ENCODE measurements at regions of chr17 and their contacts with region 1.

Region 1: GRCh38 chr17:17919169-17920107 is 52.8 kb downstream of the TOM1L2 start:
- DNase-seq: peak; percentile 70
- H3K4me3 Mint-ChIP-seq: no peak overlapping the region
- H3K27ac Mint-ChIP-seq: no peak overlapping the region
- H3K4me1 Mint-ChIP-seq: peaks cover 11% of the 10 kb centered on the region
- H3K27me3 Mint-ChIP-seq: no peaks in the 10 kb centered on the region

Region 2: DNA sequence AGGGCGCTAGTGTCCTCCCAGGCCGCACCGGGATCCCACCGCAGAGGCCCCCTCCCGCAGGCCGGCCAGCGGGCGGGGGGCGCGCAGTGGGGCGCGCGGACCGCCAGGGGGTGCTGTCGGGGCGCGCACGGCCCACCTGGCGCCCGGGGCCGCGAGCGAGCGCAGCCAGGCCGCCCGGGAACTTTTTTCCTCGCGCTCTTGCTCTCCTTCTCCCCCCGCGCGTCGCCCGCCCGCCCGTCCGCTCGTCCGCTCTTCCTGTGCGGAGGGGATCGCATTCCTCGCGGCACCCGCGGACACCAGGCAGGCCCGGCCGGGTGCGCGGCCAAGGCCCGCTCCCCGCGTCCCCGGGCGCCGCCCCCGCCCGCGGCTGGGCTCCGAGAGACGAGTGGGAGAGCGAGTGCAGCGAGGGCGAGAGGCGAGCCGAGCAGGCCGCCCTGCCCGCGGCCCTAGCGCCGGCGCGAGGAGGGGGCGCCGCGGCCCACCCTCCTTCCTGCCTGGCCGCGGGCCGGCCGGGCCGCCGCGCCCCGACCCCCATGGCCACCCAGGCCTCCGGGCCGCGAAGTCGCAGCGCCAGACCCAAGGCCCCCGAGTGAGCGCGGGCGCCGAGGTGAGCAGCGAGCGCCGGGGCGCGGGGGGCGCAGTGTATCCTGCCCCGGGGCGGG is 238.1 kb before region 1 on chr17 and contains the start of gene RAI1:
- CTCF ChIA-PET with region 1: interaction called, 18 read pairs
- POLR2A ChIA-PET with region 1: no interaction called
- DNase-seq: peak; percentile 72
- H3K4me3 Mint-ChIP-seq: peak within 1 kb of the TSS; percentile 71
- H3K27ac Mint-ChIP-seq: peak within 1 kb of the TSS; percentile 75
- H3K4me1 Mint-ChIP-seq: peaks cover 36% of the 10 kb centered on the region
- H3K27me3 Mint-ChIP-seq: peaks cover 7% of the 10 kb centered on the region
- total RNA-seq, gene RAI1: 16.7 TPM

Region 3: GRCh38 chr17:17868641-17869522 is 50.6 kb before region 1 on chr17:
- CTCF ChIA-PET with region 1: no interaction called
- POLR2A ChIA-PET with region 1: no interaction called
- DNase-seq: no peak
- H3K4me3 Mint-ChIP-seq: no peak overlapping the region
- H3K27ac Mint-ChIP-seq: no peak overlapping the region
- H3K4me1 Mint-ChIP-seq: no peaks in the 10 kb centered on the region
- H3K27me3 Mint-ChIP-seq: no peaks in the 10 kb centered on the region

Region 4: GRCh38 chr17:17890773-17891759 is 28.4 kb before region 1 on chr17:
- CTCF ChIA-PET with region 1: interaction called, 15 read pairs
- POLR2A ChIA-PET with region 1: interaction called, 3 read pairs
- DNase-seq: peak; percentile 57
- H3K4me3 Mint-ChIP-seq: no peak overlapping the region
- H3K27ac Mint-ChIP-seq: no peak overlapping the region
- H3K4me1 Mint-ChIP-seq: no peaks in the 10 kb centered on the region
- H3K27me3 Mint-ChIP-seq: no peaks in the 10 kb centered on the region

Region 5: DNA sequence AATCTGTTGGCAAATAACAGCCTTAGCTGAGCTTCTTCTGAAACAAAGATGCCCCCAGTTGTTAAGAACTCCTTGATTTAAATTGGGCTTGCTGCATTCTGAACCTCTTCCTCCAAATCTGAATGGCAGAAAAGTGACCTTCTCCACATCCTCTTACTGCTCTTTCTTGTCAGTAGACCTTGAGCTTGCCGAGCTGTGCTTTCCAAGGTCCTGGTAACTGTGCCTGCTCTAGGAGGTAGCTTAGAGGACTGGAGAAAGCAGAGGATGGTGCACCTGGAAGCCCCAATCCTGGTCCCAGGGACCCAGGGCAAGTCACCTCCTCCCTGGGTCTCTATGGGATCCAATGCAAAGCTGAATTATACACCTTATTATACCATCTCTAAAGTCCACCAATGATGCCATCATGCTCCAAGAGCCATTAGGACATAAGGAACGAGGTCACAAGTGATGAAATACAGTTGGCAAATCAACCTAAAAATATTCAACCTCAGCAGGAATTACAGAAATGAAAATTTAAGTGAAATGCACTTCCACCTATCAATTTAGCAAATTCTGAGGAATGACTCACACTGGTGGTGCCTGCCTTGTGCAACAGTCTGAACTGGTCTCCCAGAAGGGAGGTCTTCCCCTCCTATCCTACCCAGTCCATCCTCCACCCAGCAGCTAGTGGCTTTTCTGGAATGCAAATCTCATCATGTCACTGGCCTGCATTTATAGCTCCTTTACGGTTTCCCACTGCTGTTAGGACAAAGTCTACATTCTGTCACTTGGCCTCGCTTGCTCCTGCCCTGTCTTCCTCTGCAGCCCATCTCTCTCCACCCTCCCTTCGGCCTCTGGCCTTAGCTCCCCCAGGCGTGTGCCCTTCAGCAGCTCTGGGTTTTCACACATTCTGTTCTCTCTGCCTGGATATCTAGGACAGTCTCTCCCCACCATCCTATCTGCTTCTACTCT is 16.2 kb after region 1 on chr17:
- CTCF ChIA-PET with region 1: interaction called, 12 read pairs
- POLR2A ChIA-PET with region 1: no interaction called
- DNase-seq: no peak
- H3K4me3 Mint-ChIP-seq: no peak overlapping the region
- H3K27ac Mint-ChIP-seq: no peak overlapping the region
- H3K4me1 Mint-ChIP-seq: peaks cover 27% of the 10 kb centered on the region
- H3K27me3 Mint-ChIP-seq: no peaks in the 10 kb centered on the region

Region 6: GRCh38 chr17:18004884-18005305 is 85.5 kb after region 1 on chr17:
- CTCF ChIA-PET with region 1: no interaction called
- POLR2A ChIA-PET with region 1: no interaction called
- DNase-seq: no peak
- H3K4me3 Mint-ChIP-seq: no peak overlapping the region
- H3K27ac Mint-ChIP-seq: no peak overlapping the region
- H3K4me1 Mint-ChIP-seq: peaks cover 9% of the 10 kb centered on the region
- H3K27me3 Mint-ChIP-seq: no peaks in the 10 kb centered on the region

Region 7: DNA sequence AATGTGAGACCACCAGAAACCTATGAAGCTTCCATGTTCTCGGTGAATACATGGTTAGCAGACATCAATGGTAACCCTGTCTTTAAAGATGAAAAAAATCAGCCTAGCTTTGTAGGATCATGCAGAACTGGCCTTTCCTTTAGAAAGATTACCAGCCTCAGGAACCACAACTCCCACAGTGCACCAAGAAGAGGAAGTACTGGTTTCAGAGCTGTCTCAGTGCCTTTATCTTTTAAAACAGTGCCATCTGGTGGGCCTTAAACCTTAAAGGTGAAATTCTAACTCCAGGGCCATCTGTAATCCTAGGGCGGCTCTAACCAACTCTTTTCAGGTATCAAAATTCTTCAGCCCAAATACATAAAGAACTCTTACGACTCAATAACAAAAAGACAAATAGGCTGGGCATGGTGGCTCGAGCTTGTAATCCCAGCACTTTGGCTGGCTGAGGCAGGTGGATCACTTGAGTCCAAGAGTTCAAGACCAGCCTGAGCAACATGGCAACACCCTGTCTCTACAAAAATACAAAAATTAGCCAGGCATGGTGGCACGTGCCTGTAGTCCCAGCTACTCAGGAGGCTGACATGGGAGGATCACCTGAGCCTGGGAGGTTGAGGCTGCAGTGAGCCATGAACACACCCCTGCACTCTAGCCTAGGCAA is 114.1 kb after region 1 on chr17:
- CTCF ChIA-PET with region 1: interaction called, 17 read pairs
- POLR2A ChIA-PET with region 1: no interaction called
- DNase-seq: peak; percentile 64
- H3K4me3 Mint-ChIP-seq: no peak overlapping the region
- H3K27ac Mint-ChIP-seq: no peak overlapping the region
- H3K4me1 Mint-ChIP-seq: peaks cover 43% of the 10 kb centered on the region
- H3K27me3 Mint-ChIP-seq: no peaks in the 10 kb centered on the region

Region 8: GRCh38 chr17:18117982-18118975 is 198.8 kb after region 1 on chr17:
- CTCF ChIA-PET with region 1: no interaction called
- POLR2A ChIA-PET with region 1: no interaction called
- DNase-seq: no peak
- H3K4me3 Mint-ChIP-seq: no peak overlapping the region
- H3K27ac Mint-ChIP-seq: no peak overlapping the region
- H3K4me1 Mint-ChIP-seq: peaks cover 2% of the 10 kb centered on the region
- H3K27me3 Mint-ChIP-seq: no peaks in the 10 kb centered on the region